GM10248 (cell line): ENCODE measurements at regions of chr6 and their contacts with region 1.

Region 1: GRCh38 chr6:56335726-56336125 is 88.3 kb upstream of the COL21A1 start:
- DNase-seq: no peak
- CTCF ChIP-seq: no peak

Region 2: DNA sequence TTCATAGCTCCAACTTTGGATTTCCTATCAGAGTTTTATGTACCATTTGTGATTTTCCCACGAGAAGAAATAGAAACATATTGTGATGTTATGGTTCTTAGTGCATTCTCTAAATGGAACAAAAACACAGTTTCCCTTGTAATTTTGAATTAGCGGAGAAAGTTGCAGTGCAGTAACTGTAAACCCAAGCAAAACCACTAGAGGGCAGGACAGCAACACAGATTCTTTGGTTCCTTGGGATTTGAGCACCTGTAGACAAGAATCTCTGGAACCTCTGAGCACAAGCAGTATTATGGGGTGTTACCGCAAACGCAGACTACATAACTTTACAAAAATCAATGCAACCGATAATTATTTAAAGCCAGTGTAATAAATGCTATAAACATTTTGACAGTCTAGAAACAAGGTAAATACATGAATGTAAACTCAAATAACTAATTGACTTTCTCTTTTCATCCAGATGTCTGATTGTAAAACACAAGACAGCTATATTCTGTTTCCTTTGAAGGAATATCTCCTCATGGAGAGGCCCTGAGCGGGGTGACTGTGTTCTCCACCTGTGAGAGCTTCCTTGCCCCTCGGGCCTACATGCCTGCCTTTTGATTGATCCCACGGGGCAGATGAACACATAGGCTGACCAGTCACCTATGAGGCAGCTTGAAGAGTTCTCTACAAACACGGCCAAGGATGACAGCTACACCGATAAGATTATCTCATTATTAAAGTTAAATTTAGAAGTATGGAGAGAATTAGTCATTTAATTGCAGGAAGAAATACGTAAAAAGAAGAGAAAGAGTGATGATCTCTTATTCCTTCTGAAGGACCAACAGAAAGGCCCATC is 20.8 kb before region 1 on chr6:
- CTCF ChIA-PET with region 1: interaction called, 10 read pairs
- POLR2A ChIA-PET with region 1: no interaction called
- DNase-seq: peak; percentile 20
- CTCF ChIP-seq: peak; percentile 54